ENCODE measurements at regions of chr2 and their contacts with region 1.

Region 1: DNA sequence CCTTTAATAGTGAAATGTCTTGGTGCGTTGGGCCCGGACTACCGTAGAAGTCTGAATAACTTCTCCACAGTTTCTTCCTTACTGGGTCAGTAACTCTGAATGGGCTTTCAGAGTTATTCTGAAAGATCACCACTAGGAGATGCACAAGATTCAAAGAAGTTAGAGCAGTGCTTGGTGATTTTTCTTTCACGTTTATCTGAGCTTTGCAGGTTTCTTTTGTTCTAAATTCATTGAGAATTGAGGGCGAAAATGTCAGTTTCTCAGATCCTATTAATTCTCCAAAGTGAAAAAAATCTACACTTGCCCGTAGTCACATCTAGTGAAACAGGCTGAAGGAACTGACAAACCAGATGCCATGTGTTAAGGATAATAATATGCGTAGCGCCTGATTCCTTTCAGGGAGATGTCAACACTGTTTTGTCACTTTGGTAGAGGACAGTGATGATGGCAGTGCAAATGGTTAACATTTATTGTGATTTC is 70.1 kb downstream of the QPCT start:
- DNase-seq: no peak
- ATAC-seq: peak; percentile 53
- H3K4me3 Mint-ChIP-seq: no peak overlapping the region
- H3K27ac Mint-ChIP-seq: no peak overlapping the region
- H3K4me1 Mint-ChIP-seq: peaks cover 12% of the 10 kb centered on the region
- H3K27me3 Mint-ChIP-seq: no peaks in the 10 kb centered on the region
- CTCF ChIP-seq: peak; percentile 75

Region 2: GRCh38 chr2:37317746-37318145 is 96.8 kb before region 1 on chr2:
- CTCF ChIA-PET with region 1: no interaction called
- POLR2A ChIA-PET with region 1: no interaction called
- intact Hi-C with region 1: no loop called
- DNase-seq: peak; percentile 56
- ATAC-seq: peak; percentile 72
- H3K4me3 Mint-ChIP-seq: no peak overlapping the region
- H3K27ac Mint-ChIP-seq: no peak overlapping the region
- H3K4me1 Mint-ChIP-seq: peaks cover 64% of the 10 kb centered on the region
- H3K27me3 Mint-ChIP-seq: no peaks in the 10 kb centered on the region
- CTCF ChIP-seq: no peak

Region 3: DNA sequence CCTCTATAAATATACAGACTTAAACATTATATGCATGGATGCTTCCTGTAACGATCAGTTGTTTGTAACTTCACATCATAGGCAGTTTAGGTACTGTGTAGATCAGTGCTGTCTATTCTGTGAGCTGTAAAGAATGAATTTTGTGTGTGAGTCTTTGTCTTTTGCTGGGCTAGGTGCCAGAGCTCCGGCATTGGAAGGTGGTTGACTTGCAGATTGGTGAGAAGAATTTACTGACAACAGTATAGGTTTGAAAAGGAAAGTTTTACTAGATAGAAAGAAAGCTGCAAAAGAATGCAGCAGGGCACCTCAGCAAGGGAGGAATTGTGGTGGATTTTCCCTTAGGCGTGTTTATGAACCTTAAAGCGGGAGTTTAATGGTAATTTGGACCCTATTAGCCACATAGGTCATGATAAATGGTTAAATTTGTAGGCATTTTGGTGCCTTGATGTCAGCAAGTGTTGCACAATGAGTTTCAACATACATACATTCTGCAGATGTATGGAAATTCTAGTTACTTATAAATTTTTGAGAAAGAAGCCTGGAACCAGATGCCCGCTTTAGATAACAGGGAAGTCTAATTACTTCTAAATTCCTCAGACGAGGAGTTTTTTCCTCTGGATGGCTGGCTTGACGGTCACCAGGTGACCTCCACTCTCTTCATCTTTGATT is 76.7 kb before region 1 on chr2:
- CTCF ChIA-PET with region 1: no interaction called
- POLR2A ChIA-PET with region 1: no interaction called
- intact Hi-C with region 1: no loop called
- DNase-seq: no peak
- ATAC-seq: no peak
- H3K4me3 Mint-ChIP-seq: no peak overlapping the region
- H3K27ac Mint-ChIP-seq: no peak overlapping the region
- H3K4me1 Mint-ChIP-seq: peaks cover 12% of the 10 kb centered on the region
- H3K27me3 Mint-ChIP-seq: peaks cover 8% of the 10 kb centered on the region
- CTCF ChIP-seq: no peak

Region 4: GRCh38 chr2:37354531-37354930 is 60.0 kb before region 1 on chr2:
- CTCF ChIA-PET with region 1: no interaction called
- POLR2A ChIA-PET with region 1: no interaction called
- intact Hi-C with region 1: no loop called
- DNase-seq: no peak
- ATAC-seq: no peak
- H3K4me3 Mint-ChIP-seq: no peak overlapping the region
- H3K27ac Mint-ChIP-seq: no peak overlapping the region
- H3K4me1 Mint-ChIP-seq: no peaks in the 10 kb centered on the region
- H3K27me3 Mint-ChIP-seq: peaks cover 41% of the 10 kb centered on the region
- CTCF ChIP-seq: no peak

Region 5: GRCh38 chr2:37549598-37549997 is 135.1 kb after region 1 on chr2:
- CTCF ChIA-PET with region 1: interaction called, 13 read pairs
- POLR2A ChIA-PET with region 1: no interaction called
- intact Hi-C with region 1: no loop called
- DNase-seq: no peak
- ATAC-seq: no peak
- H3K4me3 Mint-ChIP-seq: no peak overlapping the region
- H3K27ac Mint-ChIP-seq: no peak overlapping the region
- H3K4me1 Mint-ChIP-seq: peaks cover 23% of the 10 kb centered on the region
- H3K27me3 Mint-ChIP-seq: no peaks in the 10 kb centered on the region
- CTCF ChIP-seq: no peak

Region 6: DNA sequence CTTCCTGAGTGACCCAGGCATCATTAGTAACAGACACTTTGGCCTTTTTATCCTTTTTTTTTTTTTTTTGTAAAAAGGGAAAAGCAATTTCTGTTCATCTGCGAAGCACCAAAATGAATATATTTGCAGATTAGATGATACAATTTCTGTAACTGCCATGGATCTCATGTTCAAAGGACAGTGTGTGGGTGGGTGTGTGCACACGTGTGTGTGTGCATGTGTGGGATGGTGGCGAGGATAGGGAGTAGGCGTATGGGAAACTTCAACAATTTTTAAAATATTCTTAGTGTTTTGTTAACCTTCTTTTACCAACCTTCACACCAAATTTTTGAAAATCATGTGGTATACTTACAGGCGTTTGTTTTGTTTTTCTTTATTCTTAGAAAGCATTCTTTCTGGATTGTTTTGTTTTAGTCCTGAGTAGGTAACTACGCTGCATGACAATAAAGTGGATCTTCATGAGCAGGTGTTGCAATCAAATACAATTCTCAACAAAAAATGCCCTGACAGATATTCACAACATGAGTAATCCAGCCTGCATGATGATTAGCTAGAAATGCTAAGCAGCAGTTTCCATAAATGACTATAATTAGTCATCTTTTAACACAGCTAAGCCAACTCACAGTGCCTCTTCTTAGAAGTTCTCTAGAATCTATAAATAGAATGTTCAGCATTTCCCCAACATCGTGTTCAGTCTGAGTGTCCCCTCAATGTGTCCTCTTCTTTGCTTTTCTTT is 457.1 kb after region 1 on chr2:
- CTCF ChIA-PET with region 1: interaction called, 110 read pairs
- POLR2A ChIA-PET with region 1: no interaction called
- intact Hi-C with region 1: loop called (anchors 5 kb)
- DNase-seq: no peak
- ATAC-seq: peak; percentile 92
- H3K4me3 Mint-ChIP-seq: peak overlapping the region; percentile 67
- H3K27ac Mint-ChIP-seq: peak overlapping the region; percentile 100
- H3K4me1 Mint-ChIP-seq: peaks cover 33% of the 10 kb centered on the region
- H3K27me3 Mint-ChIP-seq: peaks cover 2% of the 10 kb centered on the region
- CTCF ChIP-seq: no peak